Ascending aorta (tissue), 2 donors: ENCODE measurements at regions of chr7 and their contacts with region 1.

Region 1: GRCh38 chr7:100215895-100216294 is 3.9 kb upstream of the PVRIG start:
- DNase-seq: no peak
- H3K4me3 ChIP-seq: no peak overlapping the region
- H3K27ac ChIP-seq: no peak overlapping the region
- H3K4me1 ChIP-seq: no peaks in the 10 kb centered on the region
- H3K27me3 ChIP-seq: no peaks in the 10 kb centered on the region
- CTCF ChIP-seq: no peak

Region 2: DNA sequence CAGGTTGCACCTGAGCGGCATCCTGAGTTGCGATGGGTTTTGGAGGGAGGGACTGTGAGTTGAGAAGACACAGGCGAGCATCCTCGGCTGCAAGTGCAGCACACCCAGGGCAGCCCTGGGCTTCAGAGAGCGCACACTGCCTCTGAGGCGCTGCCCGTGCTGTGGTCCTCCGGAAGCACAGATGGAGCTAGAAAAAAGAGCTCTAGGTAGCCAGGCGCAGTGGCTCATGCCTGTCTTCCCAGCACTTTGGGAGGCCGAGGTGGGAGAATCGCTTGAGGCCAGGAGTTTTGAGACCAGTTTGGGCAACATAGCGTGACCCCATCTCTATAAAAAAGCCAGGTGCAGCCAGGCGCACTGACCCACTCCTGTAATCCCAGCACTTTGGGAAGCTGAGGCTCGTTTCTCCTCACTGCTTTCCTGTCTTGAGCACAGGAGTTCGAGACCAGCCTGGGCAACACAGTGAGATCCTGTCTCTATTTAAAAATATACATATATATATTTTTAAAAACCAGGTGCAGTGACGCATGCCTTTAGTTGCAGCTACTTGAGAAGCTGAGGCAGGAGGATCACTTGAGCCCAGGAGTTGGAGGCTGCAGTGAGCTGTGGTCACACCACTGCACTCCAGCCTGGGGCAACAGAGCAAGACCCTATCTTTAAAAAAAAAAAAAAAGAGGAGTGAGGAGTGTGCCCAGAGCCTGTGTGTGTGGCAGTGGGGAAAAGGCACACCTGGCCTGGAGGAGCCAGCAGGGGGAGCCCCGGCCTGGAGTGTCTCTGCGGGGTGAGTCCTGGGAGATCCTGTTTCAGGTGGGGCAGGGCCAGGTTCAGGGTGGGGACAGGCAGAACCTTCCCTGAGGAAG is 850.7 kb before region 1 on chr7:
- intact Hi-C with region 1: no loop called
- DNase-seq: no peak
- H3K4me3 ChIP-seq: no peak overlapping the region
- H3K27ac ChIP-seq: no peak overlapping the region
- H3K4me1 ChIP-seq: no peaks in the 10 kb centered on the region
- H3K27me3 ChIP-seq: no peaks in the 10 kb centered on the region
- CTCF ChIP-seq: peak; percentile 21 to 43 (median 23)

Region 3: GRCh38 chr7:100132697-100133151 is 83.2 kb before region 1 on chr7:
- intact Hi-C with region 1: loop called (anchors 5 kb)
- DNase-seq: no peak
- H3K4me3 ChIP-seq: no peak overlapping the region
- H3K27ac ChIP-seq: no peak overlapping the region
- H3K4me1 ChIP-seq: peaks cover 0 to 8% of the 10 kb centered on the region in 2 donors
- H3K27me3 ChIP-seq: no peaks in the 10 kb centered on the region
- CTCF ChIP-seq: peak; percentile 62 to 70 (median 69)

Region 4: GRCh38 chr7:100929780-100930135 is 713.9 kb after region 1 on chr7:
- intact Hi-C with region 1: no loop called
- DNase-seq: no peak
- H3K4me3 ChIP-seq: no peak overlapping the region
- H3K27ac ChIP-seq: no peak overlapping the region
- H3K4me1 ChIP-seq: no peaks in the 10 kb centered on the region
- H3K27me3 ChIP-seq: no peaks in the 10 kb centered on the region
- CTCF ChIP-seq: no peak